Activated CD4-positive, alpha-beta T cell treated with anti-CD3 and anti-CD28 coated beads for 36 hours (primary cell): ENCODE measurements at regions of chrX and their contacts with region 1.

Region 1: GRCh38 chrX:133792198-133792953 is 193.0 kb downstream of the GPC3 start:
- DNase-seq: peak; percentile 68
- ATAC-seq: peak; percentile 49
- H3K4me3 Mint-ChIP-seq: no peak overlapping the region
- H3K27ac Mint-ChIP-seq: no peak overlapping the region
- H3K4me1 Mint-ChIP-seq: no peaks in the 10 kb centered on the region
- H3K27me3 Mint-ChIP-seq: no peaks in the 10 kb centered on the region

Region 2: GRCh38 chrX:133229361-133229760 is 563.0 kb before region 1 on chrX:
- CTCF ChIA-PET with region 1: no interaction called
- POLR2A ChIA-PET with region 1: no interaction called
- intact Hi-C with region 1: no loop called
- DNase-seq: no peak
- ATAC-seq: no peak
- H3K4me3 Mint-ChIP-seq: no peak overlapping the region
- H3K27ac Mint-ChIP-seq: no peak overlapping the region
- H3K4me1 Mint-ChIP-seq: no peaks in the 10 kb centered on the region
- H3K27me3 Mint-ChIP-seq: peaks cover 5% of the 10 kb centered on the region

Region 3: GRCh38 chrX:133838761-133839676 is 46.6 kb after region 1 on chrX:
- CTCF ChIA-PET with region 1: interaction called, 4 read pairs
- POLR2A ChIA-PET with region 1: no interaction called
- intact Hi-C with region 1: loop called in 1 of 2 experiments (anchors 5 kb)
- DNase-seq: peak; percentile 22
- ATAC-seq: no peak
- H3K4me3 Mint-ChIP-seq: no peak overlapping the region
- H3K27ac Mint-ChIP-seq: no peak overlapping the region
- H3K4me1 Mint-ChIP-seq: no peaks in the 10 kb centered on the region
- H3K27me3 Mint-ChIP-seq: no peaks in the 10 kb centered on the region

Region 4: DNA sequence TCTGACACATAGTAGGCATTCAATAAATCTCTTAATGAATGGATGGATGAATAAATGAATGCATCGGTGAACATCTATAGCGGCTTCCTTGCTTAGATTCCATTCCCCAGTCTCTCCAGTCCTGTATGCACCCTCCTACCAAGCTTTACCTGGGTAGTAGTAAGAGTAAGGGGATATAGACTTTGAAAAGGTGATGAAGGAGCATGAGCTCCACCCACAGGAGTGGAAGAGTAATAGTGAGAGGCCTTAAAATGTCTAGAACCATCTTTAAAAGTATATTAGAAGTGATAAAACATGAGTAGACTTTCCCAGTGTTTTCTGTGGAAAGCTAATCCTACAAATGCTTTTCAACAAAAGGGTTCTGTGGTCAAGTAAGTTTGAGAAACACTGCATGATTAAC is 228.5 kb after region 1 on chrX:
- CTCF ChIA-PET with region 1: interaction called, 76 read pairs
- POLR2A ChIA-PET with region 1: no interaction called
- intact Hi-C with region 1: loop called (anchors 1 kb)
- DNase-seq: no peak
- ATAC-seq: no peak
- H3K4me3 Mint-ChIP-seq: no peak overlapping the region
- H3K27ac Mint-ChIP-seq: no peak overlapping the region
- H3K4me1 Mint-ChIP-seq: no peaks in the 10 kb centered on the region
- H3K27me3 Mint-ChIP-seq: peaks cover 2% of the 10 kb centered on the region

Region 5: GRCh38 chrX:134144231-134144630 is 351.9 kb after region 1 on chrX:
- CTCF ChIA-PET with region 1: no interaction called
- POLR2A ChIA-PET with region 1: no interaction called
- intact Hi-C with region 1: loop called in 1 of 2 experiments (anchors 5 kb)
- DNase-seq: no peak
- ATAC-seq: no peak
- H3K4me3 Mint-ChIP-seq: no peak overlapping the region
- H3K27ac Mint-ChIP-seq: no peak overlapping the region
- H3K4me1 Mint-ChIP-seq: no peaks in the 10 kb centered on the region
- H3K27me3 Mint-ChIP-seq: peaks cover 2% of the 10 kb centered on the region

Region 6: DNA sequence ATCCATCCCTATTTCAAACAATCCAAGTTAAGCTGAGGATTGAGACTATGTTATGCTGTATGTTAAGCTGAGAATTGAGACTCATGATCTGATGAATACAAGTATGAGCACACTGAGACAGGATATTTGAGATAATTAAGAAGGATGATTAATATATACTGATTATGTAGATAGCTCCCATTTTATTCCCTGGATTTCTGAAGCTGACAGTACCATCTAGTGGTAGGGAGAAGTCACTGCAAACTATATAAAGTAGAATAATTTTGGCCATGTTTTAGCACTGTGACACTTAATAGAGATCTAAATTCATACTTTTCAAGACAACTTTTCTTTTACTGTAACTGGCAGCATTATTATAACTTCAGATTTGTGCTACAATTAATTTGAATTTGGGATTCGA is 603.8 kb after region 1 on chrX:
- CTCF ChIA-PET with region 1: interaction called, 4 read pairs
- POLR2A ChIA-PET with region 1: no interaction called
- intact Hi-C with region 1: loop called in 1 of 2 experiments (anchors 1 kb)
- DNase-seq: no peak
- ATAC-seq: no peak
- H3K4me3 Mint-ChIP-seq: no peak overlapping the region
- H3K27ac Mint-ChIP-seq: no peak overlapping the region
- H3K4me1 Mint-ChIP-seq: no peaks in the 10 kb centered on the region
- H3K27me3 Mint-ChIP-seq: no peaks in the 10 kb centered on the region